Heart left ventricle (tissue), 16 donors: ENCODE measurements at regions of chr1 and their contacts with region 1.

Region 1: GRCh38 chr1:180188091-180188506 is 33.4 kb downstream of the QSOX1 start:
- DNase-seq: peak in 3 of 5 donors; percentile 34 to 42 (median 41)
- ATAC-seq: peak in 3 of 4 donors; percentile 48 to 66 (median 56)
- H3K4me3 ChIP-seq: no peak overlapping the region
- H3K27ac ChIP-seq: no peak overlapping the region
- H3K4me1 ChIP-seq: no peaks in the 10 kb centered on the region
- H3K27me3 ChIP-seq: no peaks in the 10 kb centered on the region
- CTCF ChIP-seq: peak; percentile 8 to 62 (median 44)
- POLR2A ChIP-seq: no peak

Region 2: DNA sequence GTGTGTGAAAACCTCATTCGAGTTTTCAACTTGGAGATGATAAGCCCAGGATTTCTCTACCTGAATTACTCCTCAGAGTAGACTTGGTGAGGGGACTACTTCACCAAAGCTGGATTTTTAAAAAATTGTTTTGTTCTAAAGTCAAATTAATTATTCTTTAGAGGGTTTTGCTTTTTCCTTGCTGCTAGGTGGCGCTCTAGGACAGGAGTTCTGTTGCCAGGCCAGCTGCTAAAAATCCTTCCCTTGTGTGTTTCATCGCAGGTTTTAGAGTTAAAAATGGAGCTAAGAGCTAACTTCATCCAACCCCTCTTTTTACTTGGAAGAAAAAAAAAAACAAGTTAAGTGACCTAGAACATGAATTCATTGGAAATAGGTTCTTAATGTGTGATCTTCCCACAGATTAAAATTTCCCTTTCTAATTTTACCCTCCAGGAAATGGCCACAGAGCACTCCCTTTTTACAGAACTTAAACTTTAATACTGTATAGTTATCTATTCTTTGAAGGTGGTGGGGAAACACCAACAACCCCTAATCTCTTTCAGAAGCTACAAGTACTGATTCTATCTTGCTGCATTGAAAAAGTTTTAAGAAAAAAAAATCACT is 481.7 kb before region 1 on chr1:
- intact Hi-C with region 1: loop called in 1 of 10 experiments (anchors 10 kb)
- DNase-seq: peak in 4 of 5 donors; percentile 37 to 63 (median 50)
- ATAC-seq: no peak
- H3K4me3 ChIP-seq: no peak overlapping the region
- H3K27ac ChIP-seq: no peak overlapping the region
- H3K4me1 ChIP-seq: peaks cover 0 to 30% (median 18%) of the 10 kb centered on the region in 12 donors
- H3K27me3 ChIP-seq: peaks cover 0 to 4% (median 0%) of the 10 kb centered on the region in 9 donors
- CTCF ChIP-seq: peak; percentile 47 to 90 (median 78)
- POLR2A ChIP-seq: no peak

Region 3: DNA sequence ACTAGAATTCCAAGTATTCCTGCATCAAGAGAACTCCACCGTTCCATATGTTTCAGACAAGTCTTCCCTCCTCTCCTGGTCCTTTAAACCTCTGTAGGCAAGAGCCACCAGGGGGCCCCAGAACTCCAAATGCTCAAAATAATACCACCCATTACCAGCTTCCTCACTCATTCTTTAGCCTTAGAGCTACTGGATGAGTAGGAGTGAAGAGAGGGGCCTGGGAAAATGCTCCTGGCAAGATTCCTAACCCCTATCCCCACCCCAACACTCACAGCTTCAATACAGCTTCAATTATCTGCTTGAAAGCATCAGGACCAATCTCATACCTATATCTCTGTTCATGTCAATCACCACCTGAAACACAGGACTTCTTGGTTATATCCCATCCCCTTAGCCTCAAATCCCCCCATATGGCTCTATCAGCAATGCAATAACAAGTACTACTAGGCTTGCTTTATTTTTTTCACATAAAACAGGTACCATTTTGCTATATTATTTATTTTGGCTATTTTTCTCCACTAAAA is 320.2 kb before region 1 on chr1:
- intact Hi-C with region 1: loop called in 1 of 10 experiments (anchors 10 kb)
- DNase-seq: peak in 1 of 5 donors; percentile 47
- ATAC-seq: peak in 3 of 4 donors; percentile 45 to 63 (median 55)
- H3K4me3 ChIP-seq: no peak overlapping the region
- H3K27ac ChIP-seq: no peak overlapping the region
- H3K4me1 ChIP-seq: peaks cover 0 to 38% (median 22%) of the 10 kb centered on the region in 12 donors
- H3K27me3 ChIP-seq: no peaks in the 10 kb centered on the region
- CTCF ChIP-seq: peak; percentile 42 to 73 (median 63)
- POLR2A ChIP-seq: no peak

Region 4: GRCh38 chr1:180262572-180263488 is 74.7 kb after region 1 on chr1:
- intact Hi-C with region 1: no loop called
- DNase-seq: no peak
- ATAC-seq: no peak
- H3K4me3 ChIP-seq: no peak overlapping the region
- H3K27ac ChIP-seq: no peak overlapping the region
- H3K4me1 ChIP-seq: peaks cover 0 to 6% (median 0%) of the 10 kb centered on the region in 12 donors
- H3K27me3 ChIP-seq: peaks cover 0 to 48% (median 25%) of the 10 kb centered on the region in 9 donors
- CTCF ChIP-seq: no peak
- POLR2A ChIP-seq: no peak

Region 5: GRCh38 chr1:180415985-180416633 is 228.0 kb after region 1 on chr1:
- intact Hi-C with region 1: loop called in 3 of 10 experiments (anchors 5 to 10 kb)
- DNase-seq: no peak
- ATAC-seq: no peak
- H3K4me3 ChIP-seq: no peak overlapping the region
- H3K27ac ChIP-seq: no peak overlapping the region
- H3K4me1 ChIP-seq: no peaks in the 10 kb centered on the region
- H3K27me3 ChIP-seq: no peaks in the 10 kb centered on the region
- CTCF ChIP-seq: peak; percentile 37 to 66 (median 56)
- POLR2A ChIP-seq: no peak

Region 6: GRCh38 chr1:180482425-180483275 is 294.6 kb after region 1 on chr1:
- intact Hi-C with region 1: loop called in 8 of 10 experiments (anchors 2 to 10 kb)
- DNase-seq: no peak
- ATAC-seq: no peak
- H3K4me3 ChIP-seq: no peak overlapping the region
- H3K27ac ChIP-seq: no peak overlapping the region
- H3K4me1 ChIP-seq: peaks cover 0 to 4% (median 0%) of the 10 kb centered on the region in 12 donors
- H3K27me3 ChIP-seq: no peaks in the 10 kb centered on the region
- CTCF ChIP-seq: peak; percentile 59 to 86 (median 74)
- POLR2A ChIP-seq: no peak